ENCODE measurements at regions of chr3 and their contacts with region 1.

Region 1: DNA sequence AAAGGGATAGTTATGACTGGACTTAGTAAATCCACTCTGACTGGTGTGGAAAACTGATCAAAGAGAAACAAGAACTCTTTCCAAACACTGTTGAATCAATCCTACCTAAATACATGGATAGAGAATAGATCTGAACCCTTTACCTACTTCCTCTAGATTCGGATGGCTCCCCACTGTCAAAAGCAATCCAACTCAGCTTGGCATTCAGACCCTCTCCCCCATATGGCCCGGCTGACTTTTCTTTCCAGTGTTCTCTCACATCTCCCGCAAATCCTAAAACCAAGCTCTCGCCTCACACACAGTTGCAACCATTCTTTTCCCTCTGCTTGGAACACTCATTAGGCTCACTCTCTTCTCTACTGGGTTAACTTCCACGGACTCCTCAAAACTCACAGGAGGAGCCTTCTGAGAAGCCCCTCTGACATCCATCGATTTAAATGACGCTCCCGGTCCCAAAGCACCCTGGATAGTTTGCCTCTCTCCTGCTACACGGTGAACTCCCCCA is 639 bp downstream of the SPICE1 start:
- DNase-seq: peak in 1 of 14 experiments; percentile 6
- ATAC-seq: peak; percentile 0
- H3K4me3 ChIP-seq: peak overlapping the region; percentile 82
- H3K4me3 Mint-ChIP-seq: no peak overlapping the region
- H3K27ac ChIP-seq: peak overlapping the region; percentile 87 to 93
- H3K27ac Mint-ChIP-seq: no peak overlapping the region
- H3K4me1 ChIP-seq: peaks cover 18% of the 10 kb centered on the region
- H3K4me1 Mint-ChIP-seq: peaks cover 7% of the 10 kb centered on the region
- H3K27me3 ChIP-seq: no peaks in the 10 kb centered on the region
- H3K27me3 Mint-ChIP-seq: peaks cover 16% of the 10 kb centered on the region
- CTCF ChIP-seq: no peak

Region 2: GRCh38 chr3:113552851-113553250 is 38.5 kb after region 1 on chr3:
- CTCF ChIA-PET with region 1: interaction called, 7 read pairs
- POLR2A ChIA-PET with region 1: interaction called, 12 read pairs
- intact Hi-C with region 1: no loop called
- DNase-seq: peak in 11 of 14 experiments; percentile 7 to 70 (median 35)
- ATAC-seq: peak; percentile 89
- H3K4me3 ChIP-seq: no peak overlapping the region
- H3K4me3 Mint-ChIP-seq: no peak overlapping the region
- H3K27ac ChIP-seq: no peak overlapping the region
- H3K27ac Mint-ChIP-seq: no peak overlapping the region
- H3K4me1 ChIP-seq: peaks cover 3% of the 10 kb centered on the region
- H3K4me1 Mint-ChIP-seq: peaks cover 60% of the 10 kb centered on the region
- H3K27me3 ChIP-seq: no peaks in the 10 kb centered on the region
- H3K27me3 Mint-ChIP-seq: no peaks in the 10 kb centered on the region
- CTCF ChIP-seq: peak; percentile 38

Region 3: DNA sequence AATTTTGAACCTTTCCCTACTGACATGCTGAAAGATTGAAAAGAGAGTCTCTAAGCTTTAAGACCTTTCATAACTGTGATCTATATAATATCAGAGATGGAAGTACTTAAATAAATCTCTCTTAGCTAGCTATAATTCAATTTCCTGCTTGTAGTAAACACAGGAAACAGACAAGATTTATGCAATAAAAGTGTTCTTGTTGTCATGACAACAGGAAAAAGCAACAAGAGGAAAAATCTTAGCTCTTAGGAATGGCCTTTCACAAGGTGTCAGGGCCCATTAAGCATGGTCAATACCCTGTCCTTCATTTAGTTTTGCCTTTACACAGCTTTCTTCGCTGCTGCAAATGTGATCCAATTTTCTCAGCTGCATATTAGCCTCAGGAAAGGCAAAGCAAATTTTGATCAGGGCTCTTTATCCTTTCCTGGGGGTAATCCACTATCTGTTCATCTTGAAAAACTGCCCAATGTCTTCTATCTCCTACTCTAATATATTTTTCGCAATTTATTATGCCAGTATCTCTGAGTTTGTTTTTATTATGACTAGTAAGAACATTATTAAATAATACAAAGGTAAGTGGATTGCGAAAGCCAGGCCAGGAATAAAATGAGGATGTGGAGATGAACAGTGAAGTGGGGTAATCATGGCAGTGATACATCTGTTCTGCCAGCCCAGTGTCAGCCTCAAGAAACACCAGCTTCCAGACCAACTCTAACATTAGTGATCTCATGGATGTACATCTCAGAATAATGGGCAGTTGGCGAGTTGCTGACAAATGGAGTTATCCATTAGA is 46.7 kb after region 1 on chr3:
- CTCF ChIA-PET with region 1: interaction called, 7 read pairs
- POLR2A ChIA-PET with region 1: interaction called, 23 read pairs
- intact Hi-C with region 1: no loop called
- DNase-seq: peak in 3 of 14 experiments; percentile 51 to 69 (median 58)
- ATAC-seq: peak; percentile 57
- H3K4me3 ChIP-seq: no peak overlapping the region
- H3K4me3 Mint-ChIP-seq: peak overlapping the region; percentile 36
- H3K27ac ChIP-seq: peak overlapping the region in 1 of 2 donors; percentile 14
- H3K27ac Mint-ChIP-seq: peak overlapping the region; percentile 83
- H3K4me1 ChIP-seq: peaks cover 24% of the 10 kb centered on the region
- H3K4me1 Mint-ChIP-seq: peaks cover 72% of the 10 kb centered on the region
- H3K27me3 ChIP-seq: no peaks in the 10 kb centered on the region
- H3K27me3 Mint-ChIP-seq: no peaks in the 10 kb centered on the region
- CTCF ChIP-seq: no peak

Region 4: DNA sequence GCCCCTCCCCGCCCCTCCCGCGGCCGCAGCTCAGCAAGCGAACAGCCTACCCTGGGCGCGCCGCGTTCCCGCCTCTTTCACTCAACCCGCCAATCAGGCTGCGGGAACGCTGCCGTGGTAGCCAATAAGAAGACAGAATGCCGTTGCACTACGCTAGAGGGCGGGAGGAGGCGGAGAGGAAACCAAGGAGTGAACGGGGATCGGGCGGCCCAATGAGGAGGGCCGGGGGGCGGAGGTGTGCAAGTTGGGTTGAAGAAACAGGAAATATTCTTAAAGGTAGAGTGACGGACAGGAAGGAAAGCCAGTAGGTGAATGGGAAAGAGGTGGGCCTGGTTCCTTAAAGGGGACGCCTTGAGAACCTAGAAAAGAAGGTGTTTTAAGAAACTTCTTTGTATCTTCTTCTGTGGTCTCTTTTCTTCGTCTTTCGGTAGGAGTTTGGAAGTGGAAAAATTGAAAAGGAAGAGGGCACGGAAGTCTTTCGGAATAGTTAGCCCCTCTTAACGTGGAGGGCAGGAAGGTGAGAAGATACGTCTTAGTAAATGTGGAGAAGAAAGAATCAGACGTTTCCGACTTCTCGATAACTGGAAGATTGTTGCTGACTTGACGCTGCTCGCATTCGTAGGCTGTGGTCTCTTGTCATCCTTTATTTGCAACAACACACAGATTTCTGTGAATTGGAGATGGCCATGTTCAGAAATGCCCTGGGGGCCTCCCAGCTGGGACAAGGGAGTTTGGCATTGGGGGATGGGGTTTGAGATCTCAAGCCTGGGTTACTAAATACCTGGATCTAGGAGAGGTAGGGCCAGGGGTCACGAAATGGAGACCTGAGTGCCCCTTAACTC is 182.6 kb after region 1 on chr3:
- CTCF ChIA-PET with region 1: no interaction called
- POLR2A ChIA-PET with region 1: interaction called, 17 read pairs
- intact Hi-C with region 1: loop called in 1 of 2 experiments (anchors 2 kb)
- DNase-seq: peak; percentile 96 to 100 (median 98)
- ATAC-seq: peak; percentile 87
- H3K4me3 ChIP-seq: peak overlapping the region; percentile 78
- H3K4me3 Mint-ChIP-seq: no peak overlapping the region
- H3K27ac ChIP-seq: peak overlapping the region; percentile 87
- H3K27ac Mint-ChIP-seq: no peak overlapping the region
- H3K4me1 ChIP-seq: peaks cover 23% of the 10 kb centered on the region
- H3K4me1 Mint-ChIP-seq: peaks cover 23% of the 10 kb centered on the region
- H3K27me3 ChIP-seq: no peaks in the 10 kb centered on the region
- H3K27me3 Mint-ChIP-seq: no peaks in the 10 kb centered on the region
- CTCF ChIP-seq: no peak

Region 5: GRCh38 chr3:113927556-113927955 is 413.2 kb after region 1 on chr3:
- CTCF ChIA-PET with region 1: no interaction called
- POLR2A ChIA-PET with region 1: no interaction called
- intact Hi-C with region 1: no loop called
- DNase-seq: no peak
- ATAC-seq: no peak
- H3K4me3 ChIP-seq: no peak overlapping the region
- H3K4me3 Mint-ChIP-seq: no peak overlapping the region
- H3K27ac ChIP-seq: no peak overlapping the region
- H3K27ac Mint-ChIP-seq: no peak overlapping the region
- H3K4me1 ChIP-seq: peaks cover 4% of the 10 kb centered on the region
- H3K4me1 Mint-ChIP-seq: no peaks in the 10 kb centered on the region
- H3K27me3 ChIP-seq: peaks cover 0 to 2% of the 10 kb centered on the region in 2 experiments
- H3K27me3 Mint-ChIP-seq: peaks cover 18% of the 10 kb centered on the region
- CTCF ChIP-seq: no peak